HepG2 (cell line): ENCODE measurements at regions of chr16 and their contacts with region 1.

Region 1: DNA sequence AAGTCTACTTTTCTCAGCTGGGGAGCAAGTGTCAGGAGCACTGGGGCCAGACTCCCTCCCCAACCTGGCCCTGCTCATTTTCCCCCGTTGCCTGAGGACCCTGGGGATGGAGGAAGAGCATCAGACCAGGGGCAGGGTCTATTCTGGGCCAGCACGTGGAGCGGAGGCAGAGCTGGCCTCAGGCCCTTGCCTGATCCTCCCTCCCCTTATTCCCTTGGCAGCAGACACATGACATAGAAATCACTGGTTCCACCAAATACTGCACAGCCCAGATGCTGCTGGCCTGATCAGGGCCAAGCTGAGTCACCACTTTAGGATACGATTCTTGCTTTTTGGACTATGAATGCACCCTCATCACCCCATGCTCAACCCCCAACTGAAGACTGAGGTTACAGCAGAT is 15.8 kb upstream of the AGRP start:
- DNase-seq: no peak
- ATAC-seq: no peak
- H3K4me3 ChIP-seq: no peak overlapping the region
- H3K27ac ChIP-seq: no peak overlapping the region
- H3K4me1 ChIP-seq: peaks cover 11% of the 10 kb centered on the region; the same call in 1 of the 2 replicates
- H3K27me3 ChIP-seq: no peaks in the 10 kb centered on the region
- CTCF ChIP-seq: no peak
- EP300 ChIP-seq: no peak
- POLR2A ChIP-seq: no peak
- RAD21 ChIP-seq: no peak

Region 2: DNA sequence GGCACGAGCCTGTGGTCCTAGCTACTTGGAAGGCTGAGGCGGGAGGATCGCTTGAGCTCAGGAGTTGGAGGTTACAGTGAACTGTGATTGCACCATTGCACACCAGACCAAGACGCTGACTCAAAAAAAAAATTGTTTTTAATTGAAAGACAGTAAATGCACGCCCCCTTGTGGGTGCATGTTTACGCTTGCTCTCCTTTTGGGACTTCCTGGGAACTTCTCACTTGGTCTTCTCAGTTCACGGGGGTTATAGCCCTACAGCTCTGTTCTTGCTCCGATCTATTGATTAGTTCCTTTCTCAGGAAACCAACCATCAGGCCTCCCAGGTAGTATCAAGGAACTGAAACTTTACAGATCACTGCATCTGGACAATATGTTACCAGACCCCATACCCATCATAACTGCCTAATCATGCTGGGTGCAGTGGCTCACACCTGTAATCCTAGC is 15.3 kb after region 1 on chr16:
- CTCF ChIA-PET with region 1: interaction called, 46 read pairs
- POLR2A ChIA-PET with region 1: no interaction called
- in situ Hi-C with region 1: no loop called
- intact Hi-C with region 1: loop called (anchors 1 kb)
- DNase-seq: peak; percentile 87
- ATAC-seq: peak; percentile 57
- H3K4me3 ChIP-seq: no peak overlapping the region
- H3K27ac ChIP-seq: no peak overlapping the region
- H3K4me1 ChIP-seq: peaks cover 19% of the 10 kb centered on the region
- H3K27me3 ChIP-seq: peaks cover 0 to 12% of the 10 kb centered on the region in 2 experiments; a peak in 1 of 5 replicates
- CTCF ChIP-seq: peak; percentile 83
- EP300 ChIP-seq: no peak
- POLR2A ChIP-seq: no peak
- RAD21 ChIP-seq: peak; percentile 66

Region 3: GRCh38 chr16:67667817-67668494 is 168.8 kb after region 1 on chr16:
- CTCF ChIA-PET with region 1: interaction called, 13 read pairs
- POLR2A ChIA-PET with region 1: no interaction called
- in situ Hi-C with region 1: no loop called
- intact Hi-C with region 1: no loop called
- DNase-seq: peak; percentile 96
- ATAC-seq: peak; percentile 88
- H3K4me3 ChIP-seq: peak overlapping the region; percentile 77 to 96 (median 88)
- H3K27ac ChIP-seq: peak overlapping the region; percentile 21
- H3K4me1 ChIP-seq: peaks cover 39% of the 10 kb centered on the region
- H3K27me3 ChIP-seq: no peaks in the 10 kb centered on the region; a peak in 1 of 5 replicates
- CTCF ChIP-seq: peak; percentile 99
- EP300 ChIP-seq: no peak
- POLR2A ChIP-seq: peak in 1 of 2 experiments; percentile 24; a peak in 1 of 4 replicates
- RAD21 ChIP-seq: peak; percentile 98